CD4-positive, alpha-beta memory T cell (primary cell): ENCODE measurements at regions of chr12 and their contacts with region 1.

Region 1: DNA sequence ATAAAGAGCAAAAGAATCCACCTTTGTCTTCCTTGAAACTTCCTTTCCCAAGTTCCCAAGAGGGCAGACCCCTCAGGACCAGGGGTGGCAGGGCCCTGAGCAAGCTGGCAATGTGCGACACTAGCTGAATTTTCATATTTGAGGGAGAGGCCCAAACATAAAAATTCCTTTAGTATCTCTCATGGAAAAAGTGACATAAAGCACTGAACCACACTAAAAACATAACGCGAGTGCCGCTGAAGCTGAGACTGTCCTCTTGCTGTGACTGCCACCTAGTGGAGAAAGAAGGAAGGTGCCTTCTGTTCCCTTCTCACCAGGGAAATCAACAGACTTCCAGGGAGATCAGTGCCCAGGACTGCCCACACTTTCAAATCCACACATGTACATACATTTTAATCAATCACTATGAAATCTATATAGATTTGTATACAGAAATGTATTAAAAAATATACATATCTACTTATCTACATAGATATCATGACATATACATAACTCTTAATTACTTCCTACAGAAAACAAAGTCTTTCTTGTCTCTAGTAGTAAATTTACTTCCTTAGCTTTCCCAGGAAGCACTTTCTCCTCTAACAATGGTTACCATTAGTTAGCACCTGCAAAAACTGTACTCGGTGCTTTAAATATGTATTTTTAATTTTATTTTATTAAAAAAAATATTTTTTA is 53.8 kb downstream of the SSH1 start:
- DNase-seq: peak; percentile 68 to 79 (median 75)
- H3K4me3 ChIP-seq: no peak overlapping the region
- H3K4me3 Mint-ChIP-seq: no peak overlapping the region
- H3K27ac ChIP-seq: no peak overlapping the region
- H3K27ac Mint-ChIP-seq: peak overlapping the region in 3 of 7 donors; percentile 43 to 73 (median 61)
- H3K4me1 ChIP-seq: no peaks in the 10 kb centered on the region
- H3K4me1 Mint-ChIP-seq: peaks cover 0 to 5% (median under 1%) of the 10 kb centered on the region in 4 donors
- H3K27me3 ChIP-seq: no peaks in the 10 kb centered on the region
- H3K27me3 Mint-ChIP-seq: no peaks in the 10 kb centered on the region

Region 2: GRCh38 chr12:108403952-108404351 is 399.6 kb before region 1 on chr12:
- CTCF ChIA-PET with region 1: no interaction called
- POLR2A ChIA-PET with region 1: no interaction called
- intact Hi-C with region 1: no loop called
- DNase-seq: no peak
- H3K4me3 ChIP-seq: no peak overlapping the region
- H3K4me3 Mint-ChIP-seq: no peak overlapping the region
- H3K27ac ChIP-seq: no peak overlapping the region
- H3K27ac Mint-ChIP-seq: no peak overlapping the region
- H3K4me1 ChIP-seq: no peaks in the 10 kb centered on the region
- H3K4me1 Mint-ChIP-seq: no peaks in the 10 kb centered on the region
- H3K27me3 ChIP-seq: no peaks in the 10 kb centered on the region
- H3K27me3 Mint-ChIP-seq: peaks cover 6 to 11% of the 10 kb centered on the region in 2 donors

Region 3: GRCh38 chr12:108611884-108612415 is 191.6 kb before region 1 on chr12:
- CTCF ChIA-PET with region 1: interaction called, 75 read pairs
- POLR2A ChIA-PET with region 1: interaction called, 22 read pairs
- intact Hi-C with region 1: loop called (anchors 1 kb)
- DNase-seq: peak; percentile 45 to 65 (median 51)
- H3K4me3 ChIP-seq: no peak overlapping the region
- H3K4me3 Mint-ChIP-seq: no peak overlapping the region
- H3K27ac ChIP-seq: no peak overlapping the region
- H3K27ac Mint-ChIP-seq: peak overlapping the region in 3 of 7 donors; percentile 23 to 75 (median 53)
- H3K4me1 ChIP-seq: peaks cover 7% of the 10 kb centered on the region
- H3K4me1 Mint-ChIP-seq: peaks cover 16 to 29% (median 26%) of the 10 kb centered on the region in 4 donors
- H3K27me3 ChIP-seq: no peaks in the 10 kb centered on the region
- H3K27me3 Mint-ChIP-seq: no peaks in the 10 kb centered on the region

Region 4: GRCh38 chr12:108633534-108634248 is 169.9 kb before region 1 on chr12 and contains the start of gene SELPLG:
- CTCF ChIA-PET with region 1: interaction called, 27 read pairs
- POLR2A ChIA-PET with region 1: interaction called, 6 read pairs
- intact Hi-C with region 1: no loop called
- DNase-seq: peak; percentile 91 to 97 (median 94)
- H3K4me3 ChIP-seq: peak within 1 kb of the TSS; percentile 92 to 95
- H3K4me3 Mint-ChIP-seq: peak within 1 kb of the TSS; percentile 94 to 100 (median 99)
- H3K27ac ChIP-seq: peak within 1 kb of the TSS; percentile 92
- H3K27ac Mint-ChIP-seq: peak within 1 kb of the TSS; percentile 99 to 100 (median 100)
- H3K4me1 ChIP-seq: peaks cover 65% of the 10 kb centered on the region
- H3K4me1 Mint-ChIP-seq: peaks cover 40 to 84% (median 54%) of the 10 kb centered on the region in 4 donors
- H3K27me3 ChIP-seq: no peaks in the 10 kb centered on the region
- H3K27me3 Mint-ChIP-seq: no peaks in the 10 kb centered on the region
- total RNA-seq, gene SELPLG: 175 to 176 TPM

Region 5: GRCh38 chr12:108685469-108686260 is 117.9 kb before region 1 on chr12:
- CTCF ChIA-PET with region 1: interaction called, 21 read pairs
- POLR2A ChIA-PET with region 1: no interaction called
- intact Hi-C with region 1: no loop called
- DNase-seq: no peak
- H3K4me3 ChIP-seq: no peak overlapping the region
- H3K4me3 Mint-ChIP-seq: no peak overlapping the region
- H3K27ac ChIP-seq: no peak overlapping the region
- H3K27ac Mint-ChIP-seq: peak overlapping the region in 3 of 7 donors; percentile 4 to 25 (median 19)
- H3K4me1 ChIP-seq: peaks cover 33% of the 10 kb centered on the region
- H3K4me1 Mint-ChIP-seq: peaks cover 25 to 46% (median 32%) of the 10 kb centered on the region in 4 donors
- H3K27me3 ChIP-seq: no peaks in the 10 kb centered on the region
- H3K27me3 Mint-ChIP-seq: no peaks in the 10 kb centered on the region

Region 6: GRCh38 chr12:108731105-108731865 is 72.3 kb before region 1 on chr12 and contains the start of gene CORO1C:
- CTCF ChIA-PET with region 1: interaction called, 3 read pairs
- POLR2A ChIA-PET with region 1: no interaction called
- intact Hi-C with region 1: loop called (anchors 2 kb)
- DNase-seq: peak; percentile 94 to 97 (median 95)
- H3K4me3 ChIP-seq: peak within 1 kb of the TSS; percentile 88 to 91
- H3K4me3 Mint-ChIP-seq: peak within 1 kb of the TSS; percentile 89 to 97 (median 95)
- H3K27ac ChIP-seq: peak within 1 kb of the TSS; percentile 69
- H3K27ac Mint-ChIP-seq: peak within 1 kb of the TSS; percentile 92 to 99 (median 98)
- H3K4me1 ChIP-seq: peaks cover 5% of the 10 kb centered on the region
- H3K4me1 Mint-ChIP-seq: peaks cover 11 to 28% (median 26%) of the 10 kb centered on the region in 4 donors
- H3K27me3 ChIP-seq: no peaks in the 10 kb centered on the region
- H3K27me3 Mint-ChIP-seq: no peaks in the 10 kb centered on the region
- total RNA-seq, gene CORO1C: 10.3 to 11.9 TPM

Region 7: GRCh38 chr12:108826101-108826806 is 22.7 kb after region 1 on chr12:
- CTCF ChIA-PET with region 1: interaction called, 12 read pairs
- POLR2A ChIA-PET with region 1: no interaction called
- intact Hi-C with region 1: no loop called
- DNase-seq: no peak
- H3K4me3 ChIP-seq: no peak overlapping the region
- H3K4me3 Mint-ChIP-seq: no peak overlapping the region
- H3K27ac ChIP-seq: no peak overlapping the region
- H3K27ac Mint-ChIP-seq: peak overlapping the region in 2 of 7 donors; percentile 19 to 36
- H3K4me1 ChIP-seq: no peaks in the 10 kb centered on the region
- H3K4me1 Mint-ChIP-seq: peaks cover 7 to 16% (median 15%) of the 10 kb centered on the region in 4 donors
- H3K27me3 ChIP-seq: no peaks in the 10 kb centered on the region
- H3K27me3 Mint-ChIP-seq: no peaks in the 10 kb centered on the region

Region 8: DNA sequence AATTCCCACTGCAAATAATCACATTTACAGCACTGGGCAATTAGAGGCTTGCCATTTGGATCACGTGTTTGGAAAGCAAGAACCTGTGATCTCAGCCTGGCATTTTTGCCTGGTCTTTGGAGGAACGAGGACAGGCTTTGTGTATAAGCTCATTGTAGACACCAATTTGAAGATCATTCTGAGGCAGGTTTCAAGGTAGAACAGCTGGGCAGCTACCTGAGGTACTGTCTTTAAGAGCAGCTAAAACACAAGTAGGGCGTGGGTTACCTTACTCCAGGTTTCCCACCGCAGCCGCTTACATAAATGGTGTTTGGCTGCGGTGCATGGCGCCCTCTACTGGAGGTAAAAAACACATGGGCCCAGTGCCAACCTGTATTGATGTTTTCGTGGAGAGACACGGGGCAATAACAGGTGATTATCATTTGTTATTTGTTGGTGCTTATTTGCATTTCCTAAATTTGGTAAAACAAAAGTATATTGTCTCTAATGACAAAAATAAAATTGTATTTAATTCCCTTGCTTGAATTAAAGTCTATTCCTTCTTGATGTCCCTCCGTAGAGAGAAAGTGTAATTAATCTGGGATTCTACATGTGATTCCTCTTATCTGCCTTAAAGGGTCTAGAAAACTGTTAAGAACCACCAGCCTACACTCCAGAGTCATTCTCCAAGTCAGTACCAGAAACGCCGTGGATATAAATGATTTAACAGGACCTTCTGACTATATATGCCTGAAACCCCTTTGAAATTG is 147.6 kb after region 1 on chr12:
- CTCF ChIA-PET with region 1: interaction called, 11 read pairs
- POLR2A ChIA-PET with region 1: no interaction called
- intact Hi-C with region 1: loop called (anchors 1 kb)
- DNase-seq: peak; percentile 68 to 76 (median 71)
- H3K4me3 ChIP-seq: no peak overlapping the region
- H3K4me3 Mint-ChIP-seq: peak overlapping the region in 2 of 8 donors; percentile 4 to 34
- H3K27ac ChIP-seq: no peak overlapping the region
- H3K27ac Mint-ChIP-seq: no peak overlapping the region
- H3K4me1 ChIP-seq: peaks cover 7% of the 10 kb centered on the region
- H3K4me1 Mint-ChIP-seq: peaks cover 0 to 5% (median 1%) of the 10 kb centered on the region in 4 donors
- H3K27me3 ChIP-seq: no peaks in the 10 kb centered on the region
- H3K27me3 Mint-ChIP-seq: peaks cover 10 to 13% of the 10 kb centered on the region in 2 donors